ENCODE measurements at regions of chr11 and their contacts with region 1.

Region 1: GRCh38 chr11:82900277-82901164 is at the start of gene PRCP:
- DNase-seq: peak; percentile 97
- H3K4me3 ChIP-seq: peak within 1 kb of the TSS; percentile 68 to 83 (median 74)
- H3K27ac ChIP-seq: peak within 1 kb of the TSS; percentile 92 to 96 (median 94)
- H3K4me1 ChIP-seq: peaks cover 9 to 40% (median 31%) of the 10 kb centered on the region in 4 donors
- H3K27me3 ChIP-seq: no peaks in the 10 kb centered on the region
- CTCF ChIP-seq: peak in 1 of 3 experiments; percentile 7
- EP300 ChIP-seq: no peak
- POLR2A ChIP-seq: no peak
- total RNA-seq, gene PRCP: 29.1 to 46.2 (median 35.0) TPM

Region 2: DNA sequence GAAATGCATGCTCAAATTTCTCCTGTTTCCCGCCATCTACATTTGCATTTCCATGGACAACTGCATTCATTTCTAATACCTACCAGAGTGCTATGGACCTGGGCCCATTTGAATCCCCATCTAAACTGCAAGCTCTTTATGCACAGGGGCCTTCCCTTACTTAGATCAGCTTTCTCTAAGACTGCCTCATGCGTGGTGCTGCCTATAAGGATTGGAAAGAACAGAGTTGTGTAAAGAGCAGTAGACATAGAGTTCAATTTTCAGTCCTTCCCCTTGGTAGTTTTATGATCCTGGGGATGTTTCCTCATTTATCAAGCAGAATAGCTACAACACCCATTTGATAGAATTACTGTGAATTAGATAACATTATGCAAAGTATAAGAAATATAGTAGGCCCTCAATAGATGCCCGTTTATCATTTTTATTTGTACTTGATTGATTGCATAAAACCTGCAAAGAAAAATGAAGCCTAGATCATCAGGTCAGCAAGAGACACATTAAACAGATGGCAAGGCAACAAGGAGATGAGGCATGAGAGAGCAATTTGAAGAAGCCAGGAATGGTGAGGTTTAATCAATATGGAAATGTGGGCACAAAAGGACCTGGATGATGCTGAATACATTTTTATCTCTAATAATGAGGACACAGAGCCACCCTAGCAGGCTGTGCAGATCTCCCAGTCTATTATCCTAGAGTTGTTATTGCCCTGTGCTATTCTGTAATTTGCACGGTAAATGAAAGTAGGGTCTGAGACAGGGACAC is 526.6 kb before region 1 on chr11:
- intact Hi-C with region 1: no loop called
- DNase-seq: no peak
- H3K4me3 ChIP-seq: no peak overlapping the region
- H3K27ac ChIP-seq: no peak overlapping the region
- H3K4me1 ChIP-seq: no peaks in the 10 kb centered on the region
- H3K27me3 ChIP-seq: no peaks in the 10 kb centered on the region
- CTCF ChIP-seq: no peak
- EP300 ChIP-seq: no peak
- POLR2A ChIP-seq: no peak

Region 3: DNA sequence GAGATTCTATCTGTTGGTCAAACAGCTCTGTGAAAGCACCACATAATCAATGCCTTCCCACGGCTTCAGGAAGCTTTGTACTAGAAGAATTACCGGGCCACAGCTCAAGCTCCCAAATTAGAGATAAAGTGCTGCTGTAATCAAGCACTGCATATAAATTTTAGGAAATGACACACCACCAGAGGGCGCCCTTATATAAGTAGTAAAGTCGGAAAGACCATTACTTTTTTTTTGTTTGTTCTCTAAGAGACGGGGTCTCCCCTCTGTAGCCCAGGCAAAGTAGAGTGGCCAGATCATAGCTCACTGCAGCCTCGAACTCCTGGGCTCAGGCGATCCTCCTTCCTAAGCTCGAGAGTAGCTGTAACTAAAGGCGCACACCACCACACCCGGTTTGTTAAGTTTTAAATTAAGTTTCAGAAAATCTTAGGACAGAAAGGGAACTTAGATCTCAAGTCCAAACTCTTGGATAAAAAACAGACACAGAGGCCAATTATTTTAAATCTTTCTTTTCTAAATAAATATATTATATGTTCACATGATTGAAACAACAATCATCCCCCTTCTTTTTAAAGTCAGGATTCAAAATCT is 32.9 kb before region 1 on chr11:
- intact Hi-C with region 1: loop called (anchors 2 kb)
- DNase-seq: peak; percentile 97
- H3K4me3 ChIP-seq: peak overlapping the region; percentile 19 to 47 (median 26)
- H3K27ac ChIP-seq: no peak overlapping the region
- H3K4me1 ChIP-seq: peaks cover 23 to 42% (median 34%) of the 10 kb centered on the region in 4 donors
- H3K27me3 ChIP-seq: no peaks in the 10 kb centered on the region
- CTCF ChIP-seq: peak; percentile 66 to 72 (median 71)
- EP300 ChIP-seq: no peak
- POLR2A ChIP-seq: no peak

Region 4: DNA sequence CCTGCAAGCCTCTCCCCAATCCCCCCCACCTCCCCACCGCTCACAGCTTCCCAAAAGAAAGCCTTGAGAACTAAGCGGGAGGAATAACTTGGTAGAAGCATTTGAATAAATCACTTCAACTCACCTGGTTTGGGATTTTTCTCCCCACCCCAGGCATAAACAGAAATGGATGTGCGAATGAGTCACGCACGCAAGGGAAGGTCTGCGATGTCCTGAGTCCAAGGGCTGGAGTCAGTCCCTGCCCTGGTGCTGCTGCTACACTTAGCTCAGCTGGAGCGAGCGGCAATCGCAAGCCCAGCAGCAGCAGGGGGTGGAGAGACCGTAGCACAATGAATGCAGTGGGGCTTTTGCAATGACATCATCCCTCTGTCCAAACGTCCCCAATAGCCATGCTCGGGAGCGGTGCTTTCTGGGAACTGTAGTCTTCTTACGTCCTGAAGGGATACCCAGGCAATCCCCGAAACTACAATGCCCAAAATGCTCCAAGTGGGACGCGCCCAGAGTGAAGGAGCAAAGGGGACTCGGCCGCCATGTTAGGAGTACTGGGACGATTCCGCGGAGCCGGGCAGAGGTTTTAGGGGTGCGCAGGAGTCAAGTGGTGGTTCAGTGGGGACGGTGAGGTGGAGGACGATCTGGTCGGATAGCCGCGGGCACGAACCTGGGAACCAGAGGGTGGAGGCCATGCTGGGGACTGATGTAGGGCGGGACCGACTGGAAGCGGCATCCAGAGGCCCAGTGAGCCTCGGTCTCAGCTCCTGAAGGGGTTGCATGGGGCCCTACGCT is 171.2 kb after region 1 on chr11 and contains the start of gene RAB30:
- intact Hi-C with region 1: loop called (anchors 5 kb)
- DNase-seq: peak; percentile 99
- H3K4me3 ChIP-seq: peak within 1 kb of the TSS; percentile 73 to 85 (median 77)
- H3K27ac ChIP-seq: peak within 1 kb of the TSS; percentile 92 to 95 (median 92)
- H3K4me1 ChIP-seq: peaks cover 37 to 53% (median 46%) of the 10 kb centered on the region in 4 donors
- H3K27me3 ChIP-seq: no peaks in the 10 kb centered on the region
- CTCF ChIP-seq: no peak
- EP300 ChIP-seq: no peak
- POLR2A ChIP-seq: peak; percentile 76
- total RNA-seq, gene RAB30: 11.3 to 19.8 (median 18.2) TPM

Region 5: GRCh38 chr11:83156150-83156995 is 255.9 kb after region 1 on chr11:
- intact Hi-C with region 1: loop called (anchors 2 kb)
- DNase-seq: peak; percentile 100
- H3K4me3 ChIP-seq: peak overlapping the region; percentile 77 to 97 (median 92)
- H3K27ac ChIP-seq: peak overlapping the region; percentile 94 to 100 (median 98)
- H3K4me1 ChIP-seq: peaks cover 16 to 27% (median 24%) of the 10 kb centered on the region in 4 donors
- H3K27me3 ChIP-seq: no peaks in the 10 kb centered on the region
- CTCF ChIP-seq: no peak
- EP300 ChIP-seq: no peak
- POLR2A ChIP-seq: peak; percentile 94

Region 6: DNA sequence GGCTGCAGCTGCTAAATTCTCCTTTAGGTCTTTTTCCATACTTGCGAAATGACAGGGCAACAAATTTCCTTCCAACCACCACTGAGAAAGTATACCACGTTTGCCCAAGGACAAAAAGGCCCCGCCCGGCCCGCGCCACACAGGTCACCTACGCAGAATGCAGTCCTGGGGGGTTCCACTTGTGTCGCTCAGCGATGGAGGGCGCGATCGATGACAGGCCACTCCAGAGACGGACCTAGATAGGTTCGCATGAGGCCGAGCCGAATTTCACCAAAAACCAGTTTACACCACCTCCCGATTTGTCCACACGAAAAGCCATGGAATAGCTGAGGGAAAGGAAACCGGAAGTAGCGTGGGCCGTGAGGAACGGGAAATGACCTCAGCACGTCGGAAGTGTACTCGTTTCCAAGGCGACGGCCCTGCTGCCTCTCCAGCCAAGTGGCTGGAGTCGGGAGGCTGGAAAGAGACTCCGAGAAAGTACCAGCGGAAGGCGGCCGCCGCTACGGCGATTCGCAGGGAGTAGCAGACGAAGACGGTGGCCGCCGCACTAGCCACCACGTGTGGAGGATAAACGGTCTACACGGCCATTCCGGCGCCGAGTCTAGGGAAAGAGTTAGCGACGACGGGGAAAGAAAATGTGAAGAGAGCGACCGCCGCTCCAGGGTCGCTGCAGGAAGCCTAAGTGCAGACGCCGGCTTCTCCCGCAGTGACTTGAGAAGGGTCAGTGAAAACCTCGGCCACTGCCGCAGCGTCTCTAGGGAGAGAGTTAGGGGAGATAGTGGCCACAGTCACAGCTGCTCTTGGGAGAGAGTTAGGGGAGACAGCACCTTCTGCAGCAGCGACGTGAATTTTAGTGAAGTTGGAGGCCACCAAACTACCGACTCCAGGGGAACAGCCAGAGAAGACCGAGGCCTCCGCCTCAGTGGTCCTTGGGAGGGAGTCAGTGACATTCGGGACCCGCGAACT is 293.1 kb after region 1 on chr11 and contains the start of gene ANKRD42:
- intact Hi-C with region 1: loop called (anchors 5 kb)
- DNase-seq: peak; percentile 99
- H3K4me3 ChIP-seq: peak within 1 kb of the TSS; percentile 72 to 86 (median 79)
- H3K27ac ChIP-seq: peak within 1 kb of the TSS; percentile 90 to 95 (median 92)
- H3K4me1 ChIP-seq: peaks cover 29 to 53% (median 45%) of the 10 kb centered on the region in 4 donors
- H3K27me3 ChIP-seq: no peaks in the 10 kb centered on the region
- CTCF ChIP-seq: peak in 1 of 3 experiments; percentile 8
- EP300 ChIP-seq: no peak
- POLR2A ChIP-seq: peak; percentile 51
- total RNA-seq, gene ANKRD42: 11.8 to 13.0 (median 12.6) TPM

Region 7: DNA sequence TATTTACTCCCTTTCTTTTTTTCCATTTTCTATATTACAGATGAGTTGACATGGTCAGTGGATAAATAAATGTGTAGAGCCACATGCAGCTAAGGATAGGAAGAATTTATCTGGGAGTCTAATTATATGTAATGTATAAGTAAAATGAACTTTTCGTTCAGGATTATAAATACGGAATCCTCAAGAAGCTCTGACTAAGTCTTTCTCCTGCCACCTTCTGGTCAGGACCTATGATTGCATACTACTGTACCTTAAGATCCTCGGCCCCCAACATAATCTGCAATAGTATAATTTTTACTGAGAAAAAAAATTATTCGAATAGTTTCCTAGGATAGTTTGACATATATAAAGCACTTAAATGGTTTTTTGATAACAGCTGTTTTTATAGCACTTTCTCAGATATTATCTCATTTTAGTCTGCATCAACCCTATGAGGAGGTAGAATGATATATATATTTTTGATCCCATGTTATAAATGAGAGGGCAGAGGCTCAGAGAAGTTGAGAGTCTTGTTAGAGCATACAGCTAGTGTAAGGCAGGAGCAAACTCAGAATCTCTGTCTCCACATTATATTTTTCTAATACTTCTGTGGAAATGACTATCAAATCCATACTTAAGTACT is 349.6 kb after region 1 on chr11:
- intact Hi-C with region 1: no loop called
- DNase-seq: no peak
- H3K4me3 ChIP-seq: no peak overlapping the region
- H3K27ac ChIP-seq: no peak overlapping the region
- H3K4me1 ChIP-seq: peaks cover 0 to 5% (median 1%) of the 10 kb centered on the region in 4 donors
- H3K27me3 ChIP-seq: no peaks in the 10 kb centered on the region
- CTCF ChIP-seq: peak; percentile 50 to 68 (median 55)
- EP300 ChIP-seq: no peak
- POLR2A ChIP-seq: no peak

Region 8: GRCh38 chr11:83285771-83286528 is 385.4 kb after region 1 on chr11 and contains the start of gene CCDC90B:
- intact Hi-C with region 1: loop called (anchors 5 kb)
- DNase-seq: peak; percentile 99
- H3K4me3 ChIP-seq: peak within 1 kb of the TSS; percentile 62 to 92 (median 82)
- H3K27ac ChIP-seq: peak within 1 kb of the TSS; percentile 89 to 96 (median 94)
- H3K4me1 ChIP-seq: peaks cover 15 to 42% (median 38%) of the 10 kb centered on the region in 4 donors
- H3K27me3 ChIP-seq: no peaks in the 10 kb centered on the region
- CTCF ChIP-seq: peak in 1 of 3 experiments; percentile 13
- EP300 ChIP-seq: no peak
- POLR2A ChIP-seq: peak; percentile 49
- total RNA-seq, gene CCDC90B: 22.7 to 56.9 (median 31.7) TPM

Measured in esophagus muscularis mucosa (tissue), 4 donors.